Heart left ventricle (tissue), 16 donors: ENCODE measurements at regions of chr7 and their contacts with region 1.

Region 1: DNA sequence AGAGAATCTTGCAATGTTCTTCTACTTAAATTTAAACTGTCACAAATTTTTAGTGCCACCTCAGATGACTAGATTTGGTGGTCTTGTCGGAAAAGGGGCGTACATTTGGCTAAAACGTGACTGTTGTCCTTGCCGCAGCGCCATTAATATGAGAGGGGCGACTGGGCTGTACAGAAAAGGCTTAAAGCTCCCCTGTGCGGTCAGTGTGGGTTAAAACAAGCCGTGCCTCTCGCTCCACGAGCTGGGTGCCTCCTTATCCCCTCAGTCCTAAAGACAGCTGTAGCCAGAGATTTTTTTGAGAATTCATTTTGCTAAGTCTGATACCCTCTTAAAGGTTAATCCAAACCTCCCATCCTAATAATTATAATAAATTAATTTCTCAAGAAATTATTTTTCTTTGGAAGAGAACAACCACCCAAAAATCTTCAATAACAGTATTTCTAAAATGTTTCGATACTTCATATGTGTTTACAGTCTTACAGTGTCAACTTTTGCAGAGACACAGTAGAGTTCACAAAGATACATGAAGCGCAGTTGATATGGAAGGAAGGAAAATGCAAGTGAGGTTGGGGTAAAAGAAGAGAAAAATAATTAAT is 68.6 kb downstream of the C7orf25 start:
- DNase-seq: peak in 4 of 5 donors; percentile 29 to 42 (median 37)
- ATAC-seq: peak; percentile 67 to 90 (median 84)
- H3K4me3 ChIP-seq: peak overlapping the region in 7 of 12 donors; percentile 0 to 40 (median 22)
- H3K27ac ChIP-seq: no peak overlapping the region
- H3K4me1 ChIP-seq: peaks cover 0 to 5% (median 0%) of the 10 kb centered on the region in 12 donors
- H3K27me3 ChIP-seq: peaks cover 0 to 9% (median 0%) of the 10 kb centered on the region in 9 donors
- CTCF ChIP-seq: peak; percentile 35 to 65 (median 52)
- POLR2A ChIP-seq: no peak

Region 2: DNA sequence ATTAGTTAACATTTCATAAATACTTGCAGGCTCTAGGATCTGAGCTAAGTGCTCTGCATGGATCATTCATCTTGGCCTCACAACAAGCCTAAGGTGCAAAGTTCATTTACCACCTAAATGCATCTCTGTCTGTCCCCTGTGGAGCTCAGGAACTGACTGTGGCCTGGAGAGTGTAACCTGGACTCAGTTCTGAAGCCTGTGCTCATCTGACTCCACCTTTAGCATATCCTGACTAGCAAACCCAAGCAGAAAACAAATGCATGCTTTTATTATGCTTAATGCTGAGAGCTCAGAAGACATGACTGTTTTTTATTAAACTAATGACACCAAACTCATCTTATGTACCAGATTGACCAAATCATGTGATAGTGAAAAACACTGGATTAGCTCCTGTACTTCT is 894.8 kb before region 1 on chr7:
- intact Hi-C with region 1: loop called in 5 of 10 experiments (anchors 5 kb)
- DNase-seq: no peak
- ATAC-seq: no peak
- H3K4me3 ChIP-seq: no peak overlapping the region
- H3K27ac ChIP-seq: no peak overlapping the region
- H3K4me1 ChIP-seq: peaks cover 0 to 2% (median 0%) of the 10 kb centered on the region in 12 donors
- H3K27me3 ChIP-seq: no peaks in the 10 kb centered on the region
- CTCF ChIP-seq: no peak
- POLR2A ChIP-seq: no peak

Region 3: DNA sequence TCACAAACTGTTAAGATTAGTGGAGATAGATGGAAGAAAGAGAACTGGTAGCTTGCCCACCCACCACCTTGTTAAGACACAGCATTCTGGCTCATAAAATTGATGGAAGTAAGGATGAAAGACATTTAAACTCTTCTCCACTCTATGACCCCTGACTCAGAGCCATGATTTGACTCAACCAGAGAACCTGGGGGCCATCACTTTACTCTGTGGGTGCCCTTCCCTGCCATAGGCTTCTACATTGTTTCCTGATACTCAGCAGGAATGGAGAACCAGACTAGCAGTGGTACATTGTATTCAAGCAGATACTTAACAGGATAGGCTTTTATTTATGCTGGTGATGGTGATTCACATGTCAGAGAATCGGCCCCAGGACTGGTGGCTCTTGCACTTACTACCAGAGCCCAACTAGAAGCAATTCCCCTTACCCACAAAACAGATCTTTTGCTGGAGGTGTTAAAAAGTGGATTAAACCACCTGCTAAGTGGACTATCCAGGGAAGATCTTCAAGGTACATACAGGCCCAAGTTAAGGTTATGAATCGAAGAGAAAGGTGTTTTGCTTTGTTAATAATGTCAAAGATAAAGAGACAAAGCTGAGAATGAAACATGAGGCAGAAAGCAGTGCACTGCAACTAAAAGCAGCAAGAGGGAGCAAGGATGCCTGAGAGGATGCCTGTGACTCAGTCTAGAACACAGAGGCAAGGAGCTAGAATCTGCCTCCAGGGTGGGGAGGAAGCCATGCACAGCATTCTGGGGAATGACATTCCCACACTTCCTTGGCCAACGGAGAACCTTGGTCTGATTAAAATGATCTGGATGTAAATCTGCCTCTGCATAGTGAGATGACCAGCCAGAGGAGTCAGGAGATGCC is 570.3 kb before region 1 on chr7:
- intact Hi-C with region 1: loop called in 1 of 10 experiments (anchors 5 kb)
- DNase-seq: no peak
- ATAC-seq: no peak
- H3K4me3 ChIP-seq: no peak overlapping the region
- H3K27ac ChIP-seq: no peak overlapping the region
- H3K4me1 ChIP-seq: no peaks in the 10 kb centered on the region
- H3K27me3 ChIP-seq: no peaks in the 10 kb centered on the region
- CTCF ChIP-seq: peak in 5 of 12 donors; percentile 12 to 36 (median 28)
- POLR2A ChIP-seq: no peak